ENCODE measurements at regions of chr2 and their contacts with region 1.

Region 1: GRCh38 chr2:105287692-105288091 is 41.8 kb downstream of the TGFBRAP1 start:
- DNase-seq: peak in 1 of 2 experiments; percentile 17
- H3K4me3 ChIP-seq: no peak overlapping the region
- H3K27ac ChIP-seq: no peak overlapping the region
- H3K4me1 ChIP-seq: no peaks in the 10 kb centered on the region
- H3K27me3 ChIP-seq: no peaks in the 10 kb centered on the region
- CTCF ChIP-seq: peak; percentile 51

Region 2: GRCh38 chr2:105545730-105546627 is 258.3 kb after region 1 on chr2:
- CTCF ChIA-PET with region 1: no interaction called
- POLR2A ChIA-PET with region 1: no interaction called
- intact Hi-C with region 1: loop called (anchors 5 kb)
- DNase-seq: peak; percentile 46 to 63
- H3K4me3 ChIP-seq: no peak overlapping the region
- H3K27ac ChIP-seq: no peak overlapping the region
- H3K4me1 ChIP-seq: peaks cover 22% of the 10 kb centered on the region
- H3K27me3 ChIP-seq: no peaks in the 10 kb centered on the region
- CTCF ChIP-seq: peak; percentile 88